Activated CD4-positive, alpha-beta memory T cell treated with anti-CD3 and anti-CD28 coated beads, Interleukin-2, amount 10 ng/mL, durations not matched to agents 7 days and 5 days (primary cell): ENCODE measurements at regions of chr22 and their contacts with region 1.

Region 1: GRCh38 chr22:50620593-50621355 is 7.2 kb downstream of the ARSA start:
- DNase-seq: peak; percentile 82
- H3K4me3 Mint-ChIP-seq: peak overlapping the region; percentile 82
- H3K27ac Mint-ChIP-seq: peak overlapping the region; percentile 99
- H3K4me1 Mint-ChIP-seq: peaks cover 38% of the 10 kb centered on the region
- H3K27me3 Mint-ChIP-seq: no peaks in the 10 kb centered on the region

Region 2: DNA sequence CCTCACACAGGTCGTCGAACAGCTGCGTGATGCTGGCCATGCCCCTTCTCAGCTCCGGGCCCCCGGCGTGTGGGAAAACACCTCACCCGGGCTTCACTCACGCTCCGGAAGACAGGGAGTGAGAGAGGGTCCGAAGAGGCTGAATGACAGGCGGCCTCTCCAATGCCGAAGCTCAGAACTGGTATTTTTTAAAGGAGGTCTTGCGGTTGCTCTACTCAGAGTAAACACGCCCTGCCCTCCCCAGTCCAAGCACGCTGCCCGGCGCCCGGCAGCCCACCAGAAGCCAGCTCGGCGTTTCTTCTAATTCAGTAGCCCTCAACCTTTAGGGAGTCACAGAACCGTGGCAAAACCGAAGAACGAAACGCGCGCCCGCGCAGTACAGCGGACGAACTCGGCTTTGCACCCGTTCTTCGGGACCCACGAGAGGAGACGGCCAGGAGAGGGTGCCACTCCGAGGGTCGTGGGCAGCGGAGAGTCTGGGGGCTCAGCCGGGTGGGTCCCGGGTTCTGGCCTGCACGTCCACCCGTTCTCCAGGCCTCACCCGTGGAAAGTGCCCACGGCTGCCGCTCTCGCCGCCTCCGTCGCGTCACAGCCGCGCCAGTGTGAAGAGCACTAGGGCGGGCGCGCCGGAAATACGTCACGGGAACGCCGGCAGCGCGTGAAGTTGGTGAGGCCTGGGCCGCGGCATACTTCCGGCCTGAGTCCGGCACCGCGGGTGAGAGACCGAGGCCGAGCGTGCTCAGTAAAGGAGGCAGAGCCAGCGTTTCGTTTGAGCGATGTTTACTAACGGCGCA is 376.2 kb before region 1 on chr22 and contains the start of gene TUBGCP6:
- CTCF ChIA-PET with region 1: interaction called, 6 read pairs
- POLR2A ChIA-PET with region 1: interaction called, 17 read pairs
- DNase-seq: peak; percentile 94
- H3K4me3 Mint-ChIP-seq: peak within 1 kb of the TSS; percentile 98
- H3K27ac Mint-ChIP-seq: peak within 1 kb of the TSS; percentile 99
- H3K4me1 Mint-ChIP-seq: peaks cover 51% of the 10 kb centered on the region
- H3K27me3 Mint-ChIP-seq: no peaks in the 10 kb centered on the region
- total RNA-seq, gene TUBGCP6: 50.6 to 53.9 TPM

Region 3: DNA sequence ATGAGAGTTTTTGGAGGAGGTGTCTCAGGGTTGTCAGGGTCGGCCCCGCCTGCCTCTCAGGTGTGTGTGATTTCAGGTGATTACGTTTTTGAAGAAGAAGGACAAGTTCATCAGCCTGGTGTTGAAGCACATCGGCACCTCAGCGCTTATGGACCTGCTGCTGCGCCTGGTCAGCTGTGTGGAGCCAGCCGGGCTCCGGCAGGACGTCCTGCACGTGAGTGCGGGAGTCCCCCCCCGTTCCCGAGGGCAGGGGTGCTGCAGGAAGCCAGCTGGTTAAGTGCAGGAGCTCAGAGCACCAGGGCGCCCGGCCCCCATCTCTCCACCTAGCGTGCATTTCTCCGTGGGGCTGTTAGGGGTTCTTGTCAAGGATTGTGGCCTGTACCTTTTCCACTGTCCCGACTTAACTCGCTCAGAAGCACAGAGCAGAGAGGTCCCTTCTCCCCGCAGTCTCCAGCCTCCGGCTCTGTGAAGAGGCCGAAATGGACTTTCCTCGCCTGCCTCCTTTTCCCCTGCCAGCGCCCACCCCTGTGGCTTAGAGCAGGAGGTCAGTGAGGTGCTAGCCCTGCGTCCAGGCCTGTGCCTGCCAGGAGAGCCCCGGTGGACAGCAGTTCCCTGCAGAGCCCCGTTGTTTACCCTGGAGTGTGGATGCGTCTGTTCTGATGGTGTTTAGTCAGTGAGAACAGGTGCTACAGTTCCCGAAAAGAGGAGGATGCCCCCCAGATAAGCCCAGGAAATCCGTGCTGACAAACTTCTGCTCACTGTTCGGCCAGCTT is 206.1 kb before region 1 on chr22:
- CTCF ChIA-PET with region 1: no interaction called
- POLR2A ChIA-PET with region 1: no interaction called
- DNase-seq: no peak
- H3K4me3 Mint-ChIP-seq: no peak overlapping the region
- H3K27ac Mint-ChIP-seq: no peak overlapping the region
- H3K4me1 Mint-ChIP-seq: no peaks in the 10 kb centered on the region
- H3K27me3 Mint-ChIP-seq: no peaks in the 10 kb centered on the region

Region 4: GRCh38 chr22:50444663-50445062 is 176.1 kb before region 1 on chr22:
- CTCF ChIA-PET with region 1: no interaction called
- POLR2A ChIA-PET with region 1: no interaction called
- DNase-seq: no peak
- H3K4me3 Mint-ChIP-seq: no peak overlapping the region
- H3K27ac Mint-ChIP-seq: no peak overlapping the region
- H3K4me1 Mint-ChIP-seq: peaks cover 16% of the 10 kb centered on the region
- H3K27me3 Mint-ChIP-seq: no peaks in the 10 kb centered on the region

Region 5: DNA sequence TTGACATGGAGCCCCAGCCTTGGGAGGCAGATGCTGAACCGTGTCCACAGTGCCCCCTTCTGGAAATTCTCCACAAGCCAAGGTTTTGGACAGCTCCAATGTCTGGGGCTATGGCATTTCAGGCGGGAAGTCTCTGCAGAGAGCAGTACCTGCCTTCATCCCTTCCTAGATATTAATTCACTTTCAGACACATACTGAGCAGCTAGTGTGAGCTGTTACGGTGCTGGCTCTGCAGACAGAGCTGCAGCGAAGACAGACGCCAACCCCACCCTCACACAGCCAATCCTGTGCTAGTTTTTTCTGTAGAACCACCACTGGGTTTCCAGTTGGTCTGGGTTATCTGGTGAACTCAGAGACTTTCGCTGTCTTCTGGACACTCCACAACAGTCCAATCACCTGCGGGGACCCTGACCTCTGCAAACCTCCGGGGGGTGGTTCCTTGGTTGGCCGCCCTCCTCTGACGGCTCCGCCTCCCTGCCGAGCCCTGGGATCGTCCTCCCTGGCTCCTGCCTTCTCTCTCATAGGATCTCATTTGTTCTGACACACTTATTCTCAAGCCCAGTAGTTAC is 122.4 kb before region 1 on chr22:
- CTCF ChIA-PET with region 1: interaction called, 13 read pairs
- POLR2A ChIA-PET with region 1: interaction called, 10 read pairs
- DNase-seq: peak; percentile 78
- H3K4me3 Mint-ChIP-seq: no peak overlapping the region
- H3K27ac Mint-ChIP-seq: no peak overlapping the region
- H3K4me1 Mint-ChIP-seq: peaks cover 2% of the 10 kb centered on the region
- H3K27me3 Mint-ChIP-seq: no peaks in the 10 kb centered on the region

Region 6: GRCh38 chr22:50530877-50531545 is 89.8 kb before region 1 on chr22:
- CTCF ChIA-PET with region 1: interaction called, 76 read pairs
- POLR2A ChIA-PET with region 1: interaction called, 117 read pairs
- DNase-seq: peak; percentile 90
- H3K4me3 Mint-ChIP-seq: peak overlapping the region; percentile 95
- H3K27ac Mint-ChIP-seq: peak overlapping the region; percentile 98
- H3K4me1 Mint-ChIP-seq: peaks cover 53% of the 10 kb centered on the region
- H3K27me3 Mint-ChIP-seq: no peaks in the 10 kb centered on the region

Region 7: DNA sequence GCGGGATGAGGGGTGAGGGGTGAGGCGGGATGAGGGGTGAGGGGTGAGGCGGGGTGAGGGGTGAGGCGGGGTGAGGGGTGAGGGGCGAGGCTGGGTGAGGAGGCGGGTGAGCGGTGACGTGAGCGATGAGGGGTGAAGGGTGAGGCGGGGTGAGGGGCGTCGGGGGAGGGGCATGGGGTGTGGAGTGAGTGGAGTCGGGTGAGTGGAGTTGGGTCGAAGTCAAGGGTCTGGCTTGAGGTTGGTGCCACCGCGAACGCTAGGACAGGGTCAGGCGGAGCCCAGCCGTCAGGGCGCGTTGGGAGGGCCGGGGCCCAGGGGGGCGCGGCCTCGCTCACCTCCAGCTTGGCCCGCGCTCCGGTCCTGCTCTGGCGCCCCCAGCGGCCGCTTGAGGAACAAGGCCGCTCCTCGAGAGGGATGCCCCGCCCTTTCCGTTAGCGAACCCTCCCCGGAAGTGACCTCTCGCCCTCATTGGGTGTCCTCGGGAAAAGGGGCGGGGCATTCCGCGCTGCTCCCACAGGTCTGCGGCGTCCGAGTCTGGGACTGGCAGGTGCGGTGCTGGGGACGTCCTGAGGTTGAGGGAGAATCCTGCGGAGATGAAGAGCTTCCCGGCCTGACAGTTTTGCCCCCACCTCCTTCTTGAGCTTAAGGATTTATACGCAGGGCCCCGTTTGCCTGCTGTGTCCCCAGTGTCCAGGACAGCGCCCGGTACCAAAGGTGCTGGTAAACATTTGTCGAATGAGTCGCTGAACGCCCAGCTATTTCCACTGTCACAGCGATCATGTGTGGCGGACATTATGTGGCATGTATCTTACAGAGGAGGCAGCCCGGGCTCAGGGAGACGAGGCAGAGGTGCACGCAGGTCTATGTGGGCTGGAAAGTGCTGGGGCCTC is 58.0 kb before region 1 on chr22 and contains the start of gene SYCE3:
- CTCF ChIA-PET with region 1: interaction called, 34 read pairs
- POLR2A ChIA-PET with region 1: interaction called, 13 read pairs
- DNase-seq: peak; percentile 98
- H3K4me3 Mint-ChIP-seq: peak within 1 kb of the TSS; percentile 77
- H3K27ac Mint-ChIP-seq: peak within 1 kb of the TSS; percentile 48
- H3K4me1 Mint-ChIP-seq: peaks cover 26% of the 10 kb centered on the region
- H3K27me3 Mint-ChIP-seq: peaks cover 25% of the 10 kb centered on the region
- total RNA-seq, gene SYCE3: 0.58 to 0.71 TPM

Region 8: DNA sequence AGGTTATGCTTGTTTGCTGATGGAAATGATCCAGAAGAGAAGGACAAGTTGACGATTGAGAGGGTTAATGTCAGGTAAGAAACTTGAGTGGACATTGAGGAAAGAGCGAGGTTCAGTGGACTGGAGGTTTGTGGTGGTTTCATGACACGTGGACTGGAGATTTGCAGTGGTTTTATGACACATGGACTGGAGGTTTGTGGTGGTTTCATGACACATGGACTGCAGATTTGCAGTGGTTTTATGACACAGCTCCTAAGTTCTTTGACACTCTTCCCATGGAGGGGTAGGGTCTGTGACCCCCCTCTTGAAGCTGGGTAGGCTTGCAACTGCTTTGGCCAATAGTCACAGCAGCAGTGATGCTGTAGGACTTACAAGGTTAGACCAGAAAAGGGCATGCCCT is 25.6 kb before region 1 on chr22:
- CTCF ChIA-PET with region 1: no interaction called
- POLR2A ChIA-PET with region 1: no interaction called
- DNase-seq: no peak
- H3K4me3 Mint-ChIP-seq: no peak overlapping the region
- H3K27ac Mint-ChIP-seq: no peak overlapping the region
- H3K4me1 Mint-ChIP-seq: peaks cover 5% of the 10 kb centered on the region
- H3K27me3 Mint-ChIP-seq: peaks cover 14% of the 10 kb centered on the region

Region 9: DNA sequence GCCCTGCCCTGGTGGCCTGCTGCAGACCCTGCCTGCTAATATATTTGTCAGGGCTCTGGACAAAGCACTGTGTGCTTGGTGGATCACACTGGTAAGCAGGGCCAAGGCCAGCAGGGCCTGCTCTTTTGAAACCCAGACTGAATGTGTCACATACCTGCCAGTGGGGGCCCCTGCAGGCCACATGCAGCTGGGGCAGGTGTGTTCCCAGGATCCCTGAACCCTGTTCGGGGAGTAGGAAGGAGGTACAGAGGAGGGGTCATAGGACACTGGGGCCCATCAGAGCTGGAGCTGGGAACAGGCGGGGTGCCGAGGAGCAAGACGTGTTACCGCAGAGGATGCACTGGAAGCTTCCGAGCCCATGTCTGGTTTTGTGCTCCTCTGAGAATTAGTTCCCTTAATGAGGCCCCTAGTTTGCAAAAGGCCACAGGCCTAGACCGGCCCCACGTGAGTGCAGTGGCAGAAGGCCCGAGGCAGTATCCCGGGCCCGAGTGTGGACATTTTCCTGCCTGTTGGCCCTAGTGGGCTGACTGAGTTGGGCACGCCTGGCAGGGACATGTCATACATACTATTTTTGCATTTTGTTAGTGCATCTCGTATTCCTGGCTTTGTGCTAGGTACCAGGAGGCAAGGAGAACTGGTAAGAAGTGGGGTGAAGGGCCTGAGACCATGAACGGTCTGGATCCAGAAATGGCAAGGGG is 106.0 kb after region 1 on chr22:
- CTCF ChIA-PET with region 1: no interaction called
- POLR2A ChIA-PET with region 1: no interaction called
- DNase-seq: no peak
- H3K4me3 Mint-ChIP-seq: no peak overlapping the region
- H3K27ac Mint-ChIP-seq: no peak overlapping the region
- H3K4me1 Mint-ChIP-seq: no peaks in the 10 kb centered on the region
- H3K27me3 Mint-ChIP-seq: no peaks in the 10 kb centered on the region